Heart left ventricle (tissue), 16 donors: ENCODE measurements at regions of chr11 and their contacts with region 1.

Region 1: GRCh38 chr11:72918851-72919250 is 104.6 kb downstream of the ATG16L2 start:
- DNase-seq: no peak
- ATAC-seq: no peak
- H3K4me3 ChIP-seq: no peak overlapping the region
- H3K27ac ChIP-seq: no peak overlapping the region
- H3K4me1 ChIP-seq: peaks cover 0 to 21% (median 12%) of the 10 kb centered on the region in 12 donors
- H3K27me3 ChIP-seq: no peaks in the 10 kb centered on the region
- CTCF ChIP-seq: no peak
- POLR2A ChIP-seq: no peak

Region 2: GRCh38 chr11:72856551-72857345 is 62.1 kb before region 1 on chr11:
- intact Hi-C with region 1: no loop called
- DNase-seq: no peak
- ATAC-seq: peak; percentile 56 to 72 (median 62)
- H3K4me3 ChIP-seq: no peak overlapping the region
- H3K27ac ChIP-seq: peak overlapping the region; percentile 5 to 74 (median 52)
- H3K4me1 ChIP-seq: peaks cover 0 to 25% (median 19%) of the 10 kb centered on the region in 12 donors
- H3K27me3 ChIP-seq: no peaks in the 10 kb centered on the region
- CTCF ChIP-seq: peak in 5 of 12 donors; percentile 8 to 41 (median 21)
- POLR2A ChIP-seq: no peak

Region 3: GRCh38 chr11:72871119-72871518 is 47.7 kb before region 1 on chr11:
- intact Hi-C with region 1: loop called in 1 of 10 experiments (anchors 5 kb)
- DNase-seq: no peak
- ATAC-seq: no peak
- H3K4me3 ChIP-seq: no peak overlapping the region
- H3K27ac ChIP-seq: peak overlapping the region in 2 of 12 donors; percentile 14 to 25
- H3K4me1 ChIP-seq: peaks cover 0 to 28% (median 6%) of the 10 kb centered on the region in 12 donors
- H3K27me3 ChIP-seq: no peaks in the 10 kb centered on the region
- CTCF ChIP-seq: no peak
- POLR2A ChIP-seq: no peak